GM13976 (cell line): ENCODE measurements at regions of chr1 and their contacts with region 1.

Region 1: GRCh38 chr1:64898107-64898845 is 68.1 kb downstream of the JAK1 start:
- DNase-seq: peak; percentile 55
- CTCF ChIP-seq: no peak

Region 2: GRCh38 chr1:64966158-64966971 is 68.1 kb after region 1 on chr1 and contains the start of gene JAK1:
- in situ Hi-C with region 1: loop called (anchors 10 kb)
- DNase-seq: peak; percentile 98
- CTCF ChIP-seq: no peak